ENCODE measurements at regions of chr11 and their contacts with region 1.

Region 1: GRCh38 chr11:30346068-30346688 is 23.3 kb downstream of the ARL14EP start:
- DNase-seq: peak; percentile 81
- H3K4me3 ChIP-seq: no peak overlapping the region
- H3K27ac ChIP-seq: no peak overlapping the region
- H3K4me1 ChIP-seq: peaks cover 43% of the 10 kb centered on the region
- CTCF ChIP-seq: peak; percentile 84

Region 2: GRCh38 chr11:30206249-30206996 is 139.8 kb before region 1 on chr11:
- CTCF ChIA-PET with region 1: no interaction called
- POLR2A ChIA-PET with region 1: no interaction called
- intact Hi-C with region 1: loop called (anchors 5 kb)
- DNase-seq: peak; percentile 41
- H3K4me3 ChIP-seq: no peak overlapping the region
- H3K27ac ChIP-seq: peak overlapping the region; percentile 46
- H3K4me1 ChIP-seq: peaks cover 22% of the 10 kb centered on the region
- CTCF ChIP-seq: no peak

Region 3: DNA sequence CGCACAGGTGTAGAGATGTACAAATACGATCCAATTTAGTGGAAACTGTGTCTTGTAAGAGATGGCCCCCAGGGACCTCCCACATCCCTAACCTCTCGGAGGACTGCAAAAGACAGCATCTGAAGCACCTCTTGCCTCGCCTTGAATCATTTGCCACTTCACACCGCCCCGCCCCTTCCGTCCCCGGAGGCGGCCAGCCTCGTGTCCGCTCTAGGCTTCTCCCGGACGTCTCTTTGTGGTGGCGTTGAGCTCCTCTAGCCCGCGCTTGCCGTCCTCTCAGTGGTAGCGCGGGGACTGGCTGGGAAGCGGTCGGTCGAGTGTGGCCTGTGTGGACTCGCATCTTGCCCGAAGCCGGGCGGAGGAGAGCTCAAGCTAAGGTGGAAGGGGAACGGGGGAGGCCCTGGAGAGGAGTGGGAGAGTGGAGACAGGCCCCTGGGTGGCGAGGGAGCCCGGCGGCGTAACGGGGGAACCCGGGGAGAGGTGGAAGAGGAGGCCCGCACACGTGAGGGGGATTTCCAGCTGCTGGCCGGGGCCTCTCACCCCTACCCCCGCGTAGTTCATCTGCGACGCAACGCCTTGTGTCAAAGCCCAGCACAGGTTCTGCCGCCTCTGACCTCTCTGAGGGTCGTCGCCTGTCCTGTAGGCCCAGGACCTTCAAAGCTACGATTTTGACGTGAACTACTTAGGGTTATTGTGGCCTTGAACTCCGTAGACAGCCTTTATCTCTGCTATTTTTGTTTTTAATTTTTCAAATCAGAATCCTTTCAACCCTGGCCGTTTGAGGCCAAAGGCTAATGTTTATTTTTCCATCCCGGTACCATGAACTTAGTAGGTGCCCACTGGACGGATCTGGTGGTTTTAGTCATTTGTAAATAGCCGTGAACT is 23.1 kb before region 1 on chr11 and contains the start of gene ARL14EP:
- CTCF ChIA-PET with region 1: interaction called, 3 read pairs
- POLR2A ChIA-PET with region 1: interaction called, 76 read pairs
- intact Hi-C with region 1: loop called (anchors 1 kb)
- DNase-seq: peak; percentile 96
- H3K4me3 ChIP-seq: peak within 1 kb of the TSS; percentile 88
- H3K27ac ChIP-seq: peak within 1 kb of the TSS; percentile 76
- H3K4me1 ChIP-seq: peaks cover 53% of the 10 kb centered on the region
- CTCF ChIP-seq: no peak
- total RNA-seq, gene ARL14EP: 30.9 and 37.8 TPM in 2 replicates

Region 4: GRCh38 chr11:30855383-30856006 is 509.3 kb after region 1 on chr11:
- CTCF ChIA-PET with region 1: no interaction called
- POLR2A ChIA-PET with region 1: interaction called, 11 read pairs
- intact Hi-C with region 1: loop called (anchors 10 kb)
- DNase-seq: peak; percentile 1
- H3K4me3 ChIP-seq: no peak overlapping the region
- H3K27ac ChIP-seq: no peak overlapping the region
- H3K4me1 ChIP-seq: no peaks in the 10 kb centered on the region
- CTCF ChIP-seq: peak; percentile 69

Region 5: GRCh38 chr11:30917859-30918478 is 571.8 kb after region 1 on chr11:
- CTCF ChIA-PET with region 1: no interaction called
- POLR2A ChIA-PET with region 1: no interaction called
- intact Hi-C with region 1: loop called (anchors 2 kb)
- DNase-seq: peak; percentile 62
- H3K4me3 ChIP-seq: no peak overlapping the region
- H3K27ac ChIP-seq: no peak overlapping the region
- H3K4me1 ChIP-seq: no peaks in the 10 kb centered on the region
- CTCF ChIP-seq: peak; percentile 89

Measured in OCI-LY7 (cell line).